ENCODE measurements at regions of chr6 and their contacts with region 1.

Region 1: DNA sequence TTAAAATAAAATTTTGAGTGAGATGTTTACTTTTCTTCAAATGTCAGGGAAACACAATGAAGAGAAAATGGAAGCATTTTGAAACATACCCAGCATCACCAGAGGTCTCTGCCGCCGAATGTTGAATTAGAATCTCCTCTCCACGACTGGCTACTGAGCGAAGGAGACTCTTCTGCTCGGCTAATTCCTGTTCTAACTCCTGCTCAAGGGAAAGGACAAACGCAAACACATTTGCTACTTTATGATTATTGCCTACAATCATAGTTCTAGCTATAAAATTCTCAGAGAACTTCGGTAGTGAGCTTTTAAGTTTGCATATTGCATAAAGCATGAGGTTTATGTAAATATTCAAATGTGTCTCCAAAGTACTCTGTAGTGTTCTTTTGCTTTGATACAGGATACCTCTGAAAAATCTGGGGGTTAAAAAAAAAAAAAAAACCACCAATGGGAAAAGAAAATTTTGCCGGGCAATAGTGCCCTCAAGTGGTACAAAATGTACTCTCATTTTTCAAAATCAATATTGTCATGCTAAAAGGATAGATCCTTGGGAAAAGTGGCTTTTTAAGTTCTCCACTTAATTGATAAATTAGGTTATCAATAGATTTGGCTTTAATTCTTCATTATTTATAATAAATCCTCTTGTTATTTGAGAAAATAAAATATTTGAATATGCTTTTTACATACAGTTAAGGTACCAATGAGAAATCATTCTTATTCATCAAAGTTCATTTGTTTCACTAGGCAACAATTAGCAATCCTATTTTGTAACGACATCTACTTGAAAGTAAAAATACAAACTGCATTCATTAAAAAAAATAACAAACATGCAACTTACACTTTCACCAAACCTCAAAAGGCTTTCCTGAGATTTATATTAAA is 369.0 kb downstream of the SYNE1 start:
- DNase-seq: peak in 2 of 9 experiments; percentile 33 to 48
- ATAC-seq: no peak
- H3K4me3 ChIP-seq: no peak overlapping the region
- H3K4me3 Mint-ChIP-seq: no peak overlapping the region
- H3K27ac ChIP-seq: no peak overlapping the region
- H3K27ac Mint-ChIP-seq: no peak overlapping the region
- H3K4me1 ChIP-seq: no peaks in the 10 kb centered on the region
- H3K4me1 Mint-ChIP-seq: peaks cover 2% of the 10 kb centered on the region
- H3K27me3 ChIP-seq: no peaks in the 10 kb centered on the region
- H3K27me3 Mint-ChIP-seq: no peaks in the 10 kb centered on the region
- CTCF ChIP-seq: peak; percentile 88

Region 2: GRCh38 chr6:151014404-151015100 is 1253.7 kb before region 1 on chr6:
- CTCF ChIA-PET with region 1: no interaction called
- POLR2A ChIA-PET with region 1: no interaction called
- intact Hi-C with region 1: loop called in 1 of 2 experiments (anchors 5 kb)
- DNase-seq: peak; percentile 12 to 74 (median 57)
- ATAC-seq: peak; percentile 77
- H3K4me3 ChIP-seq: no peak overlapping the region
- H3K4me3 Mint-ChIP-seq: peak overlapping the region; percentile 27
- H3K27ac ChIP-seq: no peak overlapping the region
- H3K27ac Mint-ChIP-seq: no peak overlapping the region
- H3K4me1 ChIP-seq: no peaks in the 10 kb centered on the region
- H3K4me1 Mint-ChIP-seq: peaks cover 3% of the 10 kb centered on the region
- H3K27me3 ChIP-seq: no peaks in the 10 kb centered on the region
- H3K27me3 Mint-ChIP-seq: no peaks in the 10 kb centered on the region
- CTCF ChIP-seq: peak; percentile 94

Region 3: DNA sequence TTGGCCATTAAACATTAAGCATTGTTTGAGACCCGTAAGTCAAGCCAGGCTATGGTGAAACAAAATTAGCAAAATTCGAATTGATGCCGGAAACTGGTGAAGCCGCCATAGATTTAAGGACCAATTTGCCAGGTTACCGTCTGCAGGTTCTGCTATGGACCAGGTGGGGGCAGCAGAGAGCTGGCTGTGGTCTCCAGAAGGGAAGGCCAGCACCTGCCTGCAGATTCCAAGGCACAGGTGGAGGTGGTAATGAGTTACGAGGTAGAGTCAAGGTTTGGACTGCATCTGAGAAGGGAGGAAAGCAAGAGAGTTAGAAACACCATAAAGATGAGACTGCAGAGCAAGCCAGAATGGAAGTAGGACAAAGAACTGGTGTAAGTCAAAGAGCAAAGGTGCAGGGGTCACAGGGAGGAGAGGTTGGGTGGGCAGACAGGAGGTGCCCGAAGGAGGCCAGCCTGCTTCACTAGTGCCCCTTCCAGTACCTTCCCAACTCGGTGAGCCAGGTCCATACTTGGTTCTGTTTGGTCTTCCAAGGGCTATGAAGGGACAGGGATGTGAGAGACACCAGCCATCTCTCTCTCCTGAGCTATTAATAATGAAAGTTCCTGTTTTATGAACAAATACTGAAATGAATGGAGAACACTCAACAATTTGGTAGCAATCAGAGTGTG is 592.3 kb before region 1 on chr6:
- CTCF ChIA-PET with region 1: interaction called, 3 read pairs
- POLR2A ChIA-PET with region 1: no interaction called
- intact Hi-C with region 1: loop called (anchors 1 to 2 kb)
- DNase-seq: peak; percentile 2 to 68 (median 29)
- ATAC-seq: peak; percentile 75
- H3K4me3 ChIP-seq: no peak overlapping the region
- H3K4me3 Mint-ChIP-seq: no peak overlapping the region
- H3K27ac ChIP-seq: no peak overlapping the region
- H3K27ac Mint-ChIP-seq: no peak overlapping the region
- H3K4me1 ChIP-seq: no peaks in the 10 kb centered on the region
- H3K4me1 Mint-ChIP-seq: no peaks in the 10 kb centered on the region
- H3K27me3 ChIP-seq: no peaks in the 10 kb centered on the region
- H3K27me3 Mint-ChIP-seq: peaks cover 2% of the 10 kb centered on the region
- CTCF ChIP-seq: peak; percentile 80

Region 4: DNA sequence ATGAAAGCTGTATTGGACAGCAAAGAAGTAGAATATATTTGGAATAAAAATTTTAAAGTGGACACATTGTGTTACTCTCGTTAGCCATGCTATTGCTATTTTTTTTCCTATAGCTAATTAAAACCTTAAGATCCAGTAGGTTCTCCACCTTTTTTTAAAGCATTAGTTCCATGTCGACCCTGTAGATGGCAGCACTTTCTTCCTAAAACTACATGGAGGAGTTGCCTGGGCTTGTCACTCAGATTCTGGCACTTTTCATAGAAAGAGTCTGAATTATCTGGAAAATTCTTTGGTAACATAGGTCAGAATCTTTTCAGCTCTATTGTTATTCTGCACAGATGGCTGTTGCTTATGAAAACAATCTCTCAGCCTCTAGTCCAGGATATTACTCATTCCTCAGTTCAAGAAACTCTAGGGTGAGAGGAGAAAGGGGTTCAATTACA is 502.7 kb before region 1 on chr6:
- CTCF ChIA-PET with region 1: interaction called, 6 read pairs
- POLR2A ChIA-PET with region 1: interaction called, 3 read pairs
- intact Hi-C with region 1: loop called (anchors 1 to 2 kb)
- DNase-seq: peak in 5 of 9 experiments; percentile 3 to 63 (median 16)
- ATAC-seq: peak; percentile 51
- H3K4me3 ChIP-seq: no peak overlapping the region
- H3K4me3 Mint-ChIP-seq: no peak overlapping the region
- H3K27ac ChIP-seq: no peak overlapping the region
- H3K27ac Mint-ChIP-seq: no peak overlapping the region
- H3K4me1 ChIP-seq: no peaks in the 10 kb centered on the region
- H3K4me1 Mint-ChIP-seq: peaks cover 5% of the 10 kb centered on the region
- H3K27me3 ChIP-seq: no peaks in the 10 kb centered on the region
- H3K27me3 Mint-ChIP-seq: peaks cover 6% of the 10 kb centered on the region
- CTCF ChIP-seq: peak; percentile 59

Region 5: DNA sequence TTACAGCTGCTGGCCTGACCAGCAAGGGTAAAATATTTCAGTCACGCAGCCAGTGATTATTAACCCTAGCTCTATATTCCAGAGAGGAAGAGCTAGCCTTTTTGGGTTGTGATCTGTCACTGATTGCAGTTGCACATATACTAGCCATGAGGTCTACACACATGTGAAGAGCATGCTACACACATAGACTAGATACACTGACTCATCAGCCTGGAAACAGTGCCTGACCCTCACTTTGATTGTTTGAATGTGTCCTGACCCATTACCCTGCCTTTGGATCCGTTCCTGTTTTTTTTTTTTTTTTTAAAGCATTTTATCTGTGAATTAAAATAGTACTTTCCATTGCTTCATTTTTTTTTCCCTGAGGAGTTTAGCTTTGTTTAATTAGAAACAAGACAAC is 409.9 kb before region 1 on chr6:
- CTCF ChIA-PET with region 1: no interaction called
- POLR2A ChIA-PET with region 1: no interaction called
- intact Hi-C with region 1: no loop called
- DNase-seq: no peak
- ATAC-seq: no peak
- H3K4me3 ChIP-seq: no peak overlapping the region
- H3K4me3 Mint-ChIP-seq: no peak overlapping the region
- H3K27ac ChIP-seq: no peak overlapping the region
- H3K27ac Mint-ChIP-seq: no peak overlapping the region
- H3K4me1 ChIP-seq: no peaks in the 10 kb centered on the region
- H3K4me1 Mint-ChIP-seq: no peaks in the 10 kb centered on the region
- H3K27me3 ChIP-seq: no peaks in the 10 kb centered on the region
- H3K27me3 Mint-ChIP-seq: no peaks in the 10 kb centered on the region
- CTCF ChIP-seq: no peak

Region 6: GRCh38 chr6:152206072-152206818 is 62.0 kb before region 1 on chr6:
- CTCF ChIA-PET with region 1: interaction called, 4 read pairs
- POLR2A ChIA-PET with region 1: no interaction called
- intact Hi-C with region 1: loop called in 1 of 2 experiments (anchors 5 kb)
- DNase-seq: peak in 7 of 9 experiments; percentile 9 to 65 (median 50)
- ATAC-seq: peak; percentile 49
- H3K4me3 ChIP-seq: no peak overlapping the region
- H3K4me3 Mint-ChIP-seq: no peak overlapping the region
- H3K27ac ChIP-seq: no peak overlapping the region
- H3K27ac Mint-ChIP-seq: peak overlapping the region; percentile 3
- H3K4me1 ChIP-seq: no peaks in the 10 kb centered on the region
- H3K4me1 Mint-ChIP-seq: peaks cover 6% of the 10 kb centered on the region
- H3K27me3 ChIP-seq: no peaks in the 10 kb centered on the region
- H3K27me3 Mint-ChIP-seq: no peaks in the 10 kb centered on the region
- CTCF ChIP-seq: peak; percentile 51

Region 7: DNA sequence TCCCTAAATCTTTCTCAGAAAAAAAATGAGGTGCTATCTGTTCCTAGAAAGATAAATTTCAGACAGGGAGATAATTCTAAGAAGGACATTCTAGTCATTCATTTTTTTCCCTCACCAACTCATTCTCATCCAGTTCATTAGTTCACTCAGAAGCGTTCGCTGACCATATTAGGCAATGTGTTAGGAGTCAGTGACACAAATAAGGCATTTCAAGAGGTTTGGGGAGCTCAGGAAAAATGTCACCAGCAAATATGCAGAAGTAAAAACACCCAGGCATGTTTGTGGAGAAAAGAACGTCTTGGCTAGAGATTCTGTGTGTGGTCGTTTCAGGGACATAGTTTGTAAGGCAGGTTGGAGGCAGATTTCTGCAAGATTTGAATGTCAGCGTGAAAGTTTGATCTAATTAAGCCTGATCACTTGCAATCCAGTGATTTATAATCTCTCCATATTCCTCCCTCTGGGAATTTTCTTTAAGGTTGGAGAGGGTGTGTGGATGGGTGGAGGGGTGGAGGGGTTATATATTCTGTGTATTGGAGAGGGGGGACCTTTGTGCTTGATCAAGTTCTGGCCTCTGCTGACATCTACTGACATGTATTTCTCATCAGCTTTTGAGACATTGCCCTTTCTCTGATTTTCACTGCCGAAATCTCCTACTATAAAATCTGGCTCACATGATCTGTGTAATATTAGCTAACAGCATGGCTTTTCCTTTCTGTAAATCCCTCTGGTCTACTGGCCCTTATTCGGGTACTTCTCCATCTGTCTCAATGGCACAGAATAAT is 433.1 kb after region 1 on chr6:
- CTCF ChIA-PET with region 1: no interaction called
- POLR2A ChIA-PET with region 1: no interaction called
- intact Hi-C with region 1: no loop called
- DNase-seq: peak in 1 of 9 experiments; percentile 2
- ATAC-seq: no peak
- H3K4me3 ChIP-seq: no peak overlapping the region
- H3K4me3 Mint-ChIP-seq: no peak overlapping the region
- H3K27ac ChIP-seq: no peak overlapping the region
- H3K27ac Mint-ChIP-seq: no peak overlapping the region
- H3K4me1 ChIP-seq: no peaks in the 10 kb centered on the region
- H3K4me1 Mint-ChIP-seq: no peaks in the 10 kb centered on the region
- H3K27me3 ChIP-seq: peaks cover 3 to 12% of the 10 kb centered on the region in 2 experiments
- H3K27me3 Mint-ChIP-seq: peaks cover 9% of the 10 kb centered on the region
- CTCF ChIP-seq: no peak